SK-N-SH (cell line): ENCODE measurements at regions of chr12 and their contacts with region 1.

Region 1: DNA sequence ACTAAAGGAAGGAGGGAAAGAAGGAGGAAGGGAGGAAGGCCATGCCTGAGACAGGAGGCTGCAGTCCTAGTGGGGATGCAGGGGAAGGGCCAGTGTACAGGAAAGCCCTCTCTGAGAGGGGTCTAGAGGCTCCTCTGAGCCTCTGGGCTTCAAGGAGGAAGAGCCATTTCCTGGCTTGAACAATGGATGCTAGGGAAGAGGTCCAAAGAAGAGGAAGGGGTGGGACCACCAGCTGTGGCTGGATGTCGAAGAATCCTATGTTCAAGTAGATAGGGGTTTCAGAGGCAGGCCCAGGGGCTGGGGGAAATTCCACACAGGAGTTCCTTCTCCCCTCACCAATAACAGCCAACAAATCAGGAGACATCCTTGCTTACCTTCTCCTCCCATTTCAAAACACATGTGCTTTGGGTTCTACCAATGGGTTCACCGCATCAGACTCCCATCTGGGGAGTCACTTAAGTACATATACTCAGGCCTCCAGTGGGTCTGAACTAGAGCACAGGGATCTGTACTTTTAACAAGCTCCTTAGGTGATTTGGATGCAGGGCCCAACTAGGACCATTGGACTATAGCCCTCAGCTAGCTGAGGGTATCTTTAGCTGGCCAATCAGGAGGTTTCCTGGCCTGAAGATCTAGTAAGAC is 32.4 kb downstream of the PRPF40B start:
- DNase-seq: no peak
- H3K4me3 ChIP-seq: no peak overlapping the region
- H3K27ac ChIP-seq: no peak overlapping the region
- H3K4me1 ChIP-seq: no peaks in the 10 kb centered on the region
- H3K27me3 ChIP-seq: no peaks in the 10 kb centered on the region
- CTCF ChIP-seq: no peak
- EP300 ChIP-seq: no peak
- RAD21 ChIP-seq: no peak

Region 2: DNA sequence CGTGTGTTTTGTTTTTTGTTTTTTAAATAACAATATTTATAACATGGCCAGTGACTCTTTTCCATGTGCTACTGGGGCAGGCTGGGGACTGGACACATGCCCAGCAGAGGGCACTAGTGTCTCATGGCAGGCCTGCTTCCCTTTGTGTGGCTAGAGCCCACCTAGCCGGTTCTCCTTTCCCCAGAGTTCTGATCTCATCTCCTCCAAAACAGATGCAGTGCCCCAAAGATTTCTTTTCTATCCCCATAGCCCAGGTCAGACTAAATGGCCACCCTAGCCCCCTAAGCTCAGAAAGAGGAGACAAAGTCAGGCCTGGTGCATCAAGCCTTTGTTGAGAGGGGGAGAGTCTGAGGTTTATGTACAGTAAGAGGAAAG is 11.1 kb before region 1 on chr12:
- CTCF ChIA-PET with region 1: interaction called, 26 read pairs
- POLR2A ChIA-PET with region 1: no interaction called
- DNase-seq: peak; percentile 91
- H3K4me3 ChIP-seq: no peak overlapping the region
- H3K27ac ChIP-seq: peak overlapping the region in 1 of 2 experiments; percentile 6; a peak in 1 of 4 replicates
- H3K4me1 ChIP-seq: peaks cover 0 to 5% of the 10 kb centered on the region in 2 experiments; a peak in 1 of 4 replicates
- H3K27me3 ChIP-seq: no peaks in the 10 kb centered on the region
- CTCF ChIP-seq: peak; percentile 98
- EP300 ChIP-seq: no peak
- RAD21 ChIP-seq: peak; percentile 98